Motor neuron (in vitro differentiated cells): ENCODE measurements at regions of chr17 and their contacts with region 1.

Region 1: DNA sequence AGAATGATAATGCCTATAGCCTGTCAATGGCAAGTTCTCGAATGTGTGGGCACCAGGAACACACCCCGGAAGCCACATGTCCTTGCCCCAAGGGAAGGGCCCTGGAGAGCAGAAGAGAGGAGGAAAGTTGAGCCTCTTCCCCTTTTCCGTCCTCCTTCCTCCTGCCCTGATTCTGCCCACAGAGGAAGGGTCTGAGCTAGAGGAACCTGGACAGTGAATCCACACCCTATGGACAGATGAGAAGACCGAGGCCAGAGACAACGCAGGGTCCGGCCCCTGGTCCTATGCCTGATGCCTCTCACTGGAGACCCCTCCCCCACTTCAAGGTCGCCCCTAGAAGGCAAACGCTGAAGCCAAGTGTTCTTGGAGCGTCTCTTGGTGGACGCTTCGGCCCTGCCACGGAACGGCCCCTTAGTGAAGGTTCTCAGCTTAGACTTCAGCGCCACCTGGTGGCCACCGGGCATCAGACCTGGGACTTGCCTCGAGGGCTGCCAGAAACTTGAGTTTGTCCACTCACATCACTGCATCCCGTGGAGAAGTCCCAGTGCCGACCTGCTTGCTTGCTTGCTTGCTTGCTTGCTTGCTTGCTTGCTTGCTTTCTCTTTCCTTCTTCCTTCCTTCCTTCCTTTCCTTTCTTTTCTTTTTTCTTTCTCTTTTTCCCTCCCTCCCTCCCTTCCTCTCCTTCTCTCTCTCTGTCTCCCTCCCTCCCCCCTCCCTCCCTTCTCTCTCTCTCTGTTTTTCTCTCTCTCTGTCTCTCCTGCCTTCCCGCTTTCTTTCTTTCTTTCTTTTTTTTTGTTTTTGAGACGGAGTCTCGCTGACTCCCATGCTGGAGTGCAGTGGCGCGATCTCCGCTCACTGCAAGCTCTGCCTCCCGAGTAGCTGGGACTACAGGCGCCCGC is 20.6 kb upstream of the SPNS3 start:
- ATAC-seq: peak; percentile 94 to 100 (median 98)
- H3K4me3 ChIP-seq: no peak overlapping the region
- H3K27ac ChIP-seq: no peak overlapping the region
- H3K4me1 ChIP-seq: no peaks in the 10 kb centered on the region

Region 2: DNA sequence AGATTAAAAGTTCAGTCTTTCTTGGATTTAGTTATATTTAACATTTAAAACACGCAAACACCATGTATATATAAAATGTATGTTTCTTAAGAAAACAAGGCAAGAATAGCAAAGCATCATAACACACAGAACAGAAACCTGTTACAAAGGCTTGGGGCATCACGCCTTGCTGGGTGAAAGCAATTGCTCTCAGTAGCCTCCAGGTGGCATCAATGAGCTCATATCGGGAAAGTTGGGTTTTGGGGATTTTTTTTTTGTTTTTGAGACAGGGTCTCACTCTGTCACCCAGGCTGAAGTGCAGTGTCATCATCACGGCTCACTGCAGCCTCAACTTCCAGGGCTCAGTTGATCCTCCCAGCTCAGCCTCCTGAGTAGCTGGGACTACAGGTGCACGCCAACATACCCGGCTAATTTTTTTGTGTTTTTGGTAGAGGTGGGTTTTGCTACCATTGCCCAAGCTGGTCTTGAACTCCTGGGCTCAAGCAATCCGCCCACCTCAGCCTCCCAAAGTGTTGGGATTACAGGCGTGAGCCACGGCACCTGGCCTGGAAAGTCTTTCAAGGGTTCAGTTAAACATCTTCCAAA is 213.3 kb before region 1 on chr17:
- in situ Hi-C with region 1: loop called in 4 of 9 experiments (anchors 10 to 25 kb)
- ATAC-seq: peak in 4 of 8 experiments; percentile 17 to 42 (median 30)
- H3K4me3 ChIP-seq: no peak overlapping the region
- H3K27ac ChIP-seq: no peak overlapping the region
- H3K4me1 ChIP-seq: no peaks in the 10 kb centered on the region

Region 3: DNA sequence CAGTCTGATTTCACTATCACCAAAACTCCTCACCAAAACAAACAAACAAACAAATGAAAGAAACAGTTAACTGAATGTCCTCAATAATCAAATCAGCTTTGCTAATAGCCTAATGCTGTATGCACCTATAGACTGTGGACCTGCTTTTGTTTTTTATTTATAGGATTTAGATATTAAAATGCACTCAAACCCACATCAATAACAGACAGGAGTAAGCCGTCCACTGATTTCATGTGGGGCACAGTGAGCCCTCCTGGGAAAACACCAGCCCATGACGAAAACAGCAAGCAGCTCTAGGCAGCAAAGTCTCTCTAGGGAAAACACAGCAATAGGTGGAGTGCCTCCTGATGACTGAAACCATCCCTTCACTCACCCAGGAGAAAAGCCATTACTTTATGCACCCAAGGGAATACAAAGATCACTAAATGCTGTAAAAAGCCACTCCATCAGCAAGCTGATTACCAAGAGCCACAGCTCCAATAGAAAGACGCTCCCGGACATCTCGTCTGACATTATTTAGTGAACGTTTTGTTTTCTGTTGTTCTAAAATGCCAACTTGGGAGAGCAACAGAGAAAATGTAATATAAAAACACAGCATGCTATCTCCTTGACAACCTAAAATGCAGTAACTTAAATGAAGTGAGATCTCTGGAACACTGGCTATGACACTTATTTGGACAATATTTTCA is 197.2 kb before region 1 on chr17:
- in situ Hi-C with region 1: loop called in 5 of 9 experiments (anchors 10 to 25 kb)
- ATAC-seq: peak in 5 of 8 experiments; percentile 88 to 95 (median 95)
- H3K4me3 ChIP-seq: no peak overlapping the region
- H3K27ac ChIP-seq: peak overlapping the region in 1 of 2 donors; percentile 33
- H3K4me1 ChIP-seq: peaks cover 0 to 4% of the 10 kb centered on the region in 2 donors

Region 4: GRCh38 chr17:5049314-5049895 is 636.2 kb after region 1 on chr17:
- in situ Hi-C with region 1: no loop called
- ATAC-seq: peak in 1 of 8 experiments; percentile 18
- H3K4me3 ChIP-seq: no peak overlapping the region
- H3K27ac ChIP-seq: no peak overlapping the region
- H3K4me1 ChIP-seq: peaks cover 0 to 10% of the 10 kb centered on the region in 2 donors